Naive thymus-derived CD4-positive, alpha-beta T cell (primary cell): ENCODE measurements at regions of chr11 and their contacts with region 1.

Region 1: GRCh38 chr11:126310228-126310991 is 6.5 kb downstream of the DCPS start:
- DNase-seq: peak in 7 of 9 donors; percentile 28 to 61 (median 41)
- ATAC-seq: peak; percentile 80
- H3K4me3 ChIP-seq: no peak overlapping the region
- H3K4me3 Mint-ChIP-seq: no peak overlapping the region
- H3K27ac ChIP-seq: no peak overlapping the region
- H3K27ac Mint-ChIP-seq: peak overlapping the region in 4 of 9 donors; percentile 13 to 64 (median 23)
- H3K4me1 ChIP-seq: peaks cover 6 to 11% of the 10 kb centered on the region in 2 donors
- H3K4me1 Mint-ChIP-seq: peaks cover 21 to 50% (median 41%) of the 10 kb centered on the region in 7 donors
- H3K27me3 ChIP-seq: no peaks in the 10 kb centered on the region
- H3K27me3 Mint-ChIP-seq: no peaks in the 10 kb centered on the region

Region 2: DNA sequence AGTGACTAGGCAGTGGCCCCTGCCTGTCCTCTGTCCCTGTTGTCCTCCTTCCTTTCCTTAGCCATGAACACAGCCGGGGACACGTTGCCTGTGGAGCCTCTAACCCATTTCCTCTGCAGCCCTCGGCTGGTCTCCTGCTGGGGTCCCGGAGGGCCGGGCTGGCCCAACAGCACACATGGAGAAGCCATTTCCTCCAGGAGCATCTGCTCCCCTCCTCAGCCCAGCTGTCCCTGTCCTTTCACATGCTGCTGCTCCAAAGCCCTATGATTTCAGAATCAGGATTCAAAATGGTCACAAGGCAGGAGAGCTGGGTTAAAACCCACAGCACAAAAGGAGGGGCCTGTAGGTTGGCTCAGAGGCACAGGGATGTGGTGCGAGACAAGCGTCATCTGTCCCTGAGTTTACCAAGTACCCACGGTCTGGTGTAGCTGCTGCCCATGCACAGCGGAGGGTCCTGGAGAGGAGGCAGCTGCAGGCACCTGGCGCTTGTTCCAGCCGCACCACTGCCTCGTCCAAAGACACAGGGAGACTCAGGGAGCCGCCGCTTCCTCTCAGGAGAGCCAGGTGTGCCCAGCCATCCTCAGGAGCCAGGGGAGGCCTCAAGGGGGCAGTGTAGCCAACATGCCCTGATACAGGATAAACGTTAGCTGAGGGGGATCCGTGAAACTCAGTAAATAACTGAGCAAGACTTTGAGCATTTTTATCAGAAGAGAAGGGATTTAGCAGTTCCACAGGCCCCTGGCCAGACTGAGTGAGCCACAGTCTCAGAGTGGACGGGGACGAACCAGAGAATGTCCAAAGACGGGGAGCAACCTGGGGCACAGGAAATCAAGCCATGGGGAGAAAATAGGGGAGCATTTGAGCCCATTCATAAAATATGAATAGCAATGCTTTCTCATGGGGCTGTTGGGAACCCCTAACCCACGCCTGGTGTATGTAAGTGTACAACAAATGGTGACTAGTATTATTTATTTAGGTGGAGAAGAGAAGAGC is 368.5 kb before region 1 on chr11:
- CTCF ChIA-PET with region 1: no interaction called
- POLR2A ChIA-PET with region 1: no interaction called
- intact Hi-C with region 1: no loop called
- DNase-seq: peak in 7 of 9 donors; percentile 8 to 49 (median 37)
- ATAC-seq: peak; percentile 65
- H3K4me3 ChIP-seq: no peak overlapping the region
- H3K4me3 Mint-ChIP-seq: peak overlapping the region in 6 of 10 donors; percentile 28 to 63 (median 40)
- H3K27ac ChIP-seq: no peak overlapping the region
- H3K27ac Mint-ChIP-seq: peak overlapping the region in 1 of 9 donors; percentile 18
- H3K4me1 ChIP-seq: no peaks in the 10 kb centered on the region
- H3K4me1 Mint-ChIP-seq: peaks cover 7 to 21% (median 16%) of the 10 kb centered on the region in 7 donors
- H3K27me3 ChIP-seq: no peaks in the 10 kb centered on the region
- H3K27me3 Mint-ChIP-seq: no peaks in the 10 kb centered on the region

Region 3: GRCh38 chr11:126391970-126392639 is 81.7 kb after region 1 on chr11:
- CTCF ChIA-PET with region 1: no interaction called
- POLR2A ChIA-PET with region 1: no interaction called
- intact Hi-C with region 1: loop called in 1 of 2 experiments (anchors 1 kb)
- DNase-seq: no peak
- ATAC-seq: peak; percentile 79
- H3K4me3 ChIP-seq: no peak overlapping the region
- H3K4me3 Mint-ChIP-seq: no peak overlapping the region
- H3K27ac ChIP-seq: no peak overlapping the region
- H3K27ac Mint-ChIP-seq: no peak overlapping the region
- H3K4me1 ChIP-seq: no peaks in the 10 kb centered on the region
- H3K4me1 Mint-ChIP-seq: peaks cover 0 to 15% (median 0%) of the 10 kb centered on the region in 7 donors
- H3K27me3 ChIP-seq: no peaks in the 10 kb centered on the region
- H3K27me3 Mint-ChIP-seq: no peaks in the 10 kb centered on the region

Region 4: DNA sequence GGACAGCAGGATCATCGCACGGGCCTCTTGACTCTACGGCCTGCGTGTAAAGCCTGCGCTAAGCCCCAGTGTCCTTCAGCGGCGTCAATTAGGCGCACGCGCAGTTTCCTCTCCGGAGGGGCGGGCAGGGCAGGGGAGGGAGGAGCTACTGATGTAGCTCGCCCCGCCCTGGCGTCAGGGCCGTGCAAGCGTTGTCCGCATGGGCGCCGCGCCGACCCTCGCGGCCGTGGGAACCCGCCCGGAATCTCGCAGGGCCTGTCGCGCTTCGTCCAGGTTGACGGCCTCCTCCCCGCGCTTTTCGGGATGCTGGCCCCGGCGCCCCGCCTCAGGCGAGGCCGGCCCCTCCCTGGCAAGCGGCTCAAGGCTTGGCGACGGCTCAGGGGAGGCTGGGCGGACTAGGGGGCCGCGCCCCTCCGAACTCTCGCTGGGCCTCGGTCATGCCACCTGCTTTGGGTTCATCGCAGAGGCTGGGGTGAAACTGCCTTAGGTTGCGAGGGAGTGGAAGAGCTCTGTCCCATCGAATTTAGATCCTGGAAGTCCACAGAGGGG is 106.2 kb after region 1 on chr11:
- CTCF ChIA-PET with region 1: no interaction called
- POLR2A ChIA-PET with region 1: no interaction called
- intact Hi-C with region 1: loop called (anchors 2 kb)
- DNase-seq: peak; percentile 26 to 71 (median 49)
- ATAC-seq: peak; percentile 93
- H3K4me3 ChIP-seq: peak overlapping the region; percentile 41
- H3K4me3 Mint-ChIP-seq: peak overlapping the region; percentile 49 to 77 (median 70)
- H3K27ac ChIP-seq: no peak overlapping the region
- H3K27ac Mint-ChIP-seq: peak overlapping the region in 3 of 9 donors; percentile 55 to 85 (median 65)
- H3K4me1 ChIP-seq: peaks cover 4 to 8% of the 10 kb centered on the region in 2 donors
- H3K4me1 Mint-ChIP-seq: peaks cover 0 to 22% (median 13%) of the 10 kb centered on the region in 7 donors
- H3K27me3 ChIP-seq: no peaks in the 10 kb centered on the region
- H3K27me3 Mint-ChIP-seq: peaks cover 0 to 6% (median 0%) of the 10 kb centered on the region in 5 donors

Region 5: GRCh38 chr11:126440792-126441514 is 130.5 kb after region 1 on chr11:
- CTCF ChIA-PET with region 1: no interaction called
- POLR2A ChIA-PET with region 1: no interaction called
- intact Hi-C with region 1: loop called in 1 of 2 experiments (anchors 1 kb)
- DNase-seq: peak; percentile 41 to 82 (median 65)
- ATAC-seq: peak; percentile 72
- H3K4me3 ChIP-seq: no peak overlapping the region
- H3K4me3 Mint-ChIP-seq: no peak overlapping the region
- H3K27ac ChIP-seq: no peak overlapping the region
- H3K27ac Mint-ChIP-seq: no peak overlapping the region
- H3K4me1 ChIP-seq: peaks cover 6% of the 10 kb centered on the region in 2 donors
- H3K4me1 Mint-ChIP-seq: peaks cover 0 to 5% (median 0%) of the 10 kb centered on the region in 7 donors
- H3K27me3 ChIP-seq: no peaks in the 10 kb centered on the region
- H3K27me3 Mint-ChIP-seq: peaks cover 0 to 16% (median 3%) of the 10 kb centered on the region in 5 donors

Region 6: GRCh38 chr11:126480410-126481302 is 170.2 kb after region 1 on chr11:
- CTCF ChIA-PET with region 1: interaction called, 21 read pairs
- POLR2A ChIA-PET with region 1: interaction called, 4 read pairs
- intact Hi-C with region 1: loop called in 1 of 2 experiments (anchors 1 kb)
- DNase-seq: peak; percentile 45 to 76 (median 65)
- ATAC-seq: peak; percentile 93
- H3K4me3 ChIP-seq: peak overlapping the region; percentile 31
- H3K4me3 Mint-ChIP-seq: peak overlapping the region; percentile 22 to 79 (median 68)
- H3K27ac ChIP-seq: no peak overlapping the region
- H3K27ac Mint-ChIP-seq: peak overlapping the region; percentile 35 to 88 (median 70)
- H3K4me1 ChIP-seq: peaks cover 0 to 13% of the 10 kb centered on the region in 2 donors
- H3K4me1 Mint-ChIP-seq: peaks cover 12 to 29% (median 19%) of the 10 kb centered on the region in 7 donors
- H3K27me3 ChIP-seq: no peaks in the 10 kb centered on the region
- H3K27me3 Mint-ChIP-seq: peaks cover 0 to 6% (median 0%) of the 10 kb centered on the region in 5 donors

Region 7: GRCh38 chr11:126561327-126561893 is 251.0 kb after region 1 on chr11:
- CTCF ChIA-PET with region 1: no interaction called
- POLR2A ChIA-PET with region 1: no interaction called
- intact Hi-C with region 1: no loop called
- DNase-seq: peak in 2 of 9 donors; percentile 4 to 31
- ATAC-seq: no peak
- H3K4me3 ChIP-seq: no peak overlapping the region
- H3K4me3 Mint-ChIP-seq: no peak overlapping the region
- H3K27ac ChIP-seq: no peak overlapping the region
- H3K27ac Mint-ChIP-seq: no peak overlapping the region
- H3K4me1 ChIP-seq: no peaks in the 10 kb centered on the region
- H3K4me1 Mint-ChIP-seq: no peaks in the 10 kb centered on the region
- H3K27me3 ChIP-seq: peaks cover 0 to 2% of the 10 kb centered on the region in 2 donors
- H3K27me3 Mint-ChIP-seq: peaks cover 3 to 41% (median 4%) of the 10 kb centered on the region in 5 donors

Region 8: DNA sequence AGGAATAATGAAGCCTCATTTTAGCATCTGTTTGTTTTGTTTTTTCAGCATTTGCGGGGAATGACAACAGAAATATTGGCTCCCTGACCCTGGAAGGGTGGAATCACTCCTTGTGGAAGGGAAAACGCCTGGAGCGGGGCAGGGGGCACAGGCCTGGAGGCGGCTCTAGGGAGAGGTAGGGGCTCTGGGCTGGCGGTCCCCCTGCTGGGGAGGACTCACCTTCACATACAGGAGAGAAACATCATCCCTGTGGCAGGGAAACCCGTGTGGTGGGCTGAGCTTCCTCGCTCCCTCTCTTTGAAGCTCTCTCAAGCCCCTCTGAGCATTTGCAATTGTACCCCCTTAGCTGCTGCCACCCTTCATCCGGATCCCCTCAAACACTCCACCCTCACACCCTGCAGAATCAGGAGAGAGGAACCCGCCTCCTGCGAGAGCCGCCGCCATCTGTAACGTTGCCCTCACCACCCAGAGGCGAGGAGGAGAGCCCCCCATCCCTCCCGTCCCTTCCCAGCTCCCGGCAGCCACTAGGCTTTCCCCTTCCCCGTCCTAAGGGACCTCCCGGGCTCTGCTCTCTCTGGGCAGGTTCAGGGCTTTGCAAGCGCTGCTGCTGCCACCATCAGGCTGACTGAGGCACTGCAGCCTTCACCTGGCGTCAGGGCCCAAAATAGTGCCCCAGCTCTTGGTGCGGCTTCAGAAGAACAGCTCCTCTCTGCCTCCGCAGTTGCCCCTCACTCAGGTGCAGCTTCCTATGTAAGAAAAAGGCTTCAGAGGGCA is 679.7 kb after region 1 on chr11:
- CTCF ChIA-PET with region 1: no interaction called
- POLR2A ChIA-PET with region 1: no interaction called
- intact Hi-C with region 1: loop called in 1 of 2 experiments (anchors 5 kb)
- DNase-seq: peak in 7 of 9 donors; percentile 2 to 59 (median 20)
- ATAC-seq: peak; percentile 58
- H3K4me3 ChIP-seq: no peak overlapping the region
- H3K4me3 Mint-ChIP-seq: no peak overlapping the region
- H3K27ac ChIP-seq: no peak overlapping the region
- H3K27ac Mint-ChIP-seq: no peak overlapping the region
- H3K4me1 ChIP-seq: no peaks in the 10 kb centered on the region
- H3K4me1 Mint-ChIP-seq: peaks cover 0 to 2% (median 0%) of the 10 kb centered on the region in 7 donors
- H3K27me3 ChIP-seq: no peaks in the 10 kb centered on the region
- H3K27me3 Mint-ChIP-seq: peaks cover 7 to 49% (median 31%) of the 10 kb centered on the region in 5 donors